CD4-positive, alpha-beta T cell (primary cell): ENCODE measurements at regions of chr3 and their contacts with region 1.

Region 1: DNA sequence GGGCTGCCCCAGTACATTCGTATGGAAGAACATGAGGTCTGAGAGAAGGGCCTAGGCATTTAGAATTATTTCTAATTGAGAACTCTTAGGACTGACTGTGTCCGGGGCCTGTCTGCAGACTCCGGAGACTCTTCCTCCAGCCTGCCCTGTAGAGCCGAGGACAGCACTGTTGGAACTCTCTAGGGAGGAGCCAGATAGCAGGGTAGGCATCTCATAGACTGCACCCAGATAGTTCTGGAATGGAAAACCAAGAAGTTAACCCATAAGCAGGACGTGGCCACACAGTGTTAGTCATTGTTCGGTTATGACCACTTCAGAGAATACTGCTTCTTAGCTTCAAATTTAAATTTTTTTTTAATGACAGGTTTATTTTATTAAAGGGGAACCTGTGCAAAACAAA is 59.5 kb downstream of the SNRK start:
- DNase-seq: no peak
- ATAC-seq: no peak
- H3K4me3 ChIP-seq: no peak overlapping the region
- H3K4me3 Mint-ChIP-seq: peak overlapping the region; percentile 58
- H3K27ac ChIP-seq: peak overlapping the region; percentile 36 to 62
- H3K27ac Mint-ChIP-seq: peak overlapping the region; percentile 96
- H3K4me1 ChIP-seq: peaks cover 71% of the 10 kb centered on the region
- H3K4me1 Mint-ChIP-seq: peaks cover 91% of the 10 kb centered on the region
- H3K27me3 ChIP-seq: no peaks in the 10 kb centered on the region
- H3K27me3 Mint-ChIP-seq: no peaks in the 10 kb centered on the region
- CTCF ChIP-seq: no peak

Region 2: DNA sequence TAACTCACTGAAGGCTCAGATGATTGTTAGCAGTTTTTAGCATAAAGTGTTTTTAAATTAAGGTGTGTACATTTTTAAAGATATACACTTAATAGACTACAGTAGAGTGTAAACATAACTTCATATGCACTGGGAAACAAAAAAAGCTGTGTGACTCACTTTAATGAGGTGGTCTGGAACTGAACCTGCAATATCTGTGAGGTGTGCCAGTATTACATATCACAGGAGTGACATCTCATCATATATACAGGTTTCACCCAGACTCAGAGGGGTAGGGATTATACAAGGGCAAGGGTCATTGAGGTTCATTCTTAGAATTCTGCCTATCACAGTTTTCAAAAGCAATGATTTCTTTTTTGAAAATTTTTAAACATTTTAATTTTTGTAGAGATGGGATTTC is 66.8 kb before region 1 on chr3:
- CTCF ChIA-PET with region 1: no interaction called
- POLR2A ChIA-PET with region 1: no interaction called
- intact Hi-C with region 1: no loop called
- DNase-seq: no peak
- ATAC-seq: no peak
- H3K4me3 ChIP-seq: no peak overlapping the region
- H3K4me3 Mint-ChIP-seq: no peak overlapping the region
- H3K27ac ChIP-seq: no peak overlapping the region
- H3K27ac Mint-ChIP-seq: no peak overlapping the region
- H3K4me1 ChIP-seq: no peaks in the 10 kb centered on the region
- H3K4me1 Mint-ChIP-seq: peaks cover 10% of the 10 kb centered on the region
- H3K27me3 ChIP-seq: no peaks in the 10 kb centered on the region
- H3K27me3 Mint-ChIP-seq: no peaks in the 10 kb centered on the region
- CTCF ChIP-seq: no peak

Region 3: GRCh38 chr3:43317461-43318316 is 28.2 kb before region 1 on chr3:
- CTCF ChIA-PET with region 1: no interaction called
- POLR2A ChIA-PET with region 1: interaction called, 11 read pairs
- intact Hi-C with region 1: no loop called
- DNase-seq: no peak
- ATAC-seq: peak; percentile 21
- H3K4me3 ChIP-seq: no peak overlapping the region
- H3K4me3 Mint-ChIP-seq: peak overlapping the region; percentile 69
- H3K27ac ChIP-seq: no peak overlapping the region
- H3K27ac Mint-ChIP-seq: peak overlapping the region; percentile 57
- H3K4me1 ChIP-seq: peaks cover 38% of the 10 kb centered on the region
- H3K4me1 Mint-ChIP-seq: peaks cover 95% of the 10 kb centered on the region
- H3K27me3 ChIP-seq: no peaks in the 10 kb centered on the region
- H3K27me3 Mint-ChIP-seq: no peaks in the 10 kb centered on the region
- CTCF ChIP-seq: no peak

Region 4: GRCh38 chr3:43326891-43327581 is 18.8 kb before region 1 on chr3:
- CTCF ChIA-PET with region 1: no interaction called
- POLR2A ChIA-PET with region 1: interaction called, 14 read pairs
- intact Hi-C with region 1: no loop called
- DNase-seq: no peak
- ATAC-seq: no peak
- H3K4me3 ChIP-seq: no peak overlapping the region
- H3K4me3 Mint-ChIP-seq: peak overlapping the region; percentile 52
- H3K27ac ChIP-seq: peak overlapping the region; percentile 4 to 9
- H3K27ac Mint-ChIP-seq: peak overlapping the region; percentile 49
- H3K4me1 ChIP-seq: peaks cover 38% of the 10 kb centered on the region
- H3K4me1 Mint-ChIP-seq: peaks cover 94% of the 10 kb centered on the region
- H3K27me3 ChIP-seq: no peaks in the 10 kb centered on the region
- H3K27me3 Mint-ChIP-seq: no peaks in the 10 kb centered on the region
- CTCF ChIP-seq: no peak